Activated CD4-positive, alpha-beta T cell treated with anti-CD3 and anti-CD28 coated beads for 36 hours (primary cell): ENCODE measurements at regions of chr2 and their contacts with region 1.

Region 1: DNA sequence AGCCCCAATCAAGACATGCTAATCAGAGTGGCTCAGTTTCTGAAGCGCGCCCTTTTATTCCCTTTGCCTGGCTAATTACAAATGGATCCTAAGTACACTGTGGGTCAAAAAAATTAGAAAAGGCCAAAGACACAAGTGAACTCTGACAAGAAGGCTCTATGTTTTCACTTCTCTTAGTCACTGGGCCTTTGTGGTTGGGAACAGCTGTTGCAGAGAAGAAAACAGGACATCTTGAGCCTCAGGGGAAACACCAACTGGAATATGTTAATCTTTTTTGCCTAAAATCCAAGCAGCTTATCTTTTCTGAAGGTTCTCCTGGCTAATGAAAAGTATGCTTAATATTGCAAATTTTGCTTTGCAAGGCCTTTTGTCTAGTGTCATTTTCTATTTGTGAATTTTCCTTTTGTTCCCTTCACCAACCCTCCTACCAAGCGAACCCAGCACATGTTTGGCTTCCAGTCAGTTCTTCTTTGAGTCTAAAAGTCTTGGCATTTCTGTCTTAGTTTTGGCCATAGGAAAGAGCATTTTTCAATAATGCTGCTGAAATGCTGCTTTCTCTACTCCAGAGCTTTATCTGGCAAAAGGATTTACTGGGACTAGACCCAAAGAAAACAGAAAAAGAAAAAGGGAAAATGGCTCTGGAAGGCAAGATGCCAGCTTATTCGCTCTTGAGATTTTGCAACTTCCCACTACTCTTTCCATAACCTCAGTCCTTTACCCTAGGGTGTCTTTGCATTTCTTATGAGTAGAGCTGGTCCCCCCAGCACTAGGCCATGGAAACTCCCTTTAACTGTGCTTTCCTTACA is 440.2 kb upstream of the ST6GAL2 start:
- DNase-seq: no peak
- ATAC-seq: no peak
- H3K4me3 Mint-ChIP-seq: no peak overlapping the region
- H3K27ac Mint-ChIP-seq: no peak overlapping the region
- H3K4me1 Mint-ChIP-seq: no peaks in the 10 kb centered on the region
- H3K27me3 Mint-ChIP-seq: no peaks in the 10 kb centered on the region

Region 2: GRCh38 chr2:107337209-107337898 is 11.2 kb after region 1 on chr2:
- CTCF ChIA-PET with region 1: no interaction called
- POLR2A ChIA-PET with region 1: no interaction called
- intact Hi-C with region 1: loop called in 1 of 2 experiments (anchors 2 kb)
- DNase-seq: no peak
- ATAC-seq: no peak
- H3K4me3 Mint-ChIP-seq: no peak overlapping the region
- H3K27ac Mint-ChIP-seq: no peak overlapping the region
- H3K4me1 Mint-ChIP-seq: no peaks in the 10 kb centered on the region
- H3K27me3 Mint-ChIP-seq: no peaks in the 10 kb centered on the region

Region 3: DNA sequence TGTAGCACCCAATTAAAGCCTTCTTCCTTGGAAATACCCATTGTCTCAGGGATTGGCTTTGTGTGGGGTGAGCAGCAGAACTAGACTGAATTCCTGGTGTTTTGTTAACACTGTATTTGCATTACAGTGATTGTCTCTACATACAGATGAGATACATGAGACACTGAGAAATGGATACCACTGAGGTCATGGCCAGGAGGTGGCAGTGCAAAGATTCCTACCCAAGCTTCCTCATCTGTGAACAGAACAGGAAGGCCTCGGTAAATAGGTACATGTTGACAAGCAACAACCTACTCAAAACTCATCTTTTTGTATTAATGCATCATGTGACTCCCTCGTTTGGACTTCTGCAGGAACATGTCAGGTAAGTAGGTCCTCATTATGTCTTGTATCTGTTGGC is 54.7 kb after region 1 on chr2:
- CTCF ChIA-PET with region 1: no interaction called
- POLR2A ChIA-PET with region 1: no interaction called
- intact Hi-C with region 1: no loop called
- DNase-seq: no peak
- ATAC-seq: no peak
- H3K4me3 Mint-ChIP-seq: no peak overlapping the region
- H3K27ac Mint-ChIP-seq: no peak overlapping the region
- H3K4me1 Mint-ChIP-seq: no peaks in the 10 kb centered on the region
- H3K27me3 Mint-ChIP-seq: no peaks in the 10 kb centered on the region

Region 4: DNA sequence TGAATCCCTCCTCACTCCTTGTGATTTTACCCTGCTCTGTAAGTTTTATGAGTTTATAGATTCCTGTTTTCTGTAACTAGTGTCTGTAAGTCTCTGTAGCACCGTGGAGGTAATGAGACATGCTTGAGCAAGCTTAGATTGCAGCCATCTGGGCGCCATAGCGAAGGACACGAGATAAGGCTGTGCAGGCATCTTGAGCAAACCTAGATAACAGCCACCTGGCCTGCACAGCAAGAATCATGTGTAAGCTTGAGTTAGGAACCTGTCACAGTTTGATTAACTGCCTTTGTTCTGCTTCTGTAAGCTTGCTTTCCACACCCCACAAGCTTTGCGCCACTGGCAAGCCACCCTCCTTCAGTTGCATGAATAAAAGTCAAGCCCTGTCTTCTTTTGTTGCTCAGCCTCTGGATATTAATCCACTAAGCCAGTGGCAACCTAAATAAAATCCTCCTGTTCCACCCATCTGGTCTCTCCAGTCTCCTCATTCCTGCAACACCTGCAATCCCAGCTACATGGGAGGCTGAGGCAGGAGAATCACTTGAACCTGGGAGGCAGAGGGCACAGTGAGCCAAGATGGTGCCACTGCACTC is 229.9 kb after region 1 on chr2:
- CTCF ChIA-PET with region 1: no interaction called
- POLR2A ChIA-PET with region 1: no interaction called
- intact Hi-C with region 1: no loop called
- DNase-seq: no peak
- ATAC-seq: no peak
- H3K4me3 Mint-ChIP-seq: no peak overlapping the region
- H3K27ac Mint-ChIP-seq: no peak overlapping the region
- H3K4me1 Mint-ChIP-seq: no peaks in the 10 kb centered on the region
- H3K27me3 Mint-ChIP-seq: no peaks in the 10 kb centered on the region